Activated CD8-positive, alpha-beta T cell treated with anti-CD3 and anti-CD28 coated beads for 36 hours (primary cell): ENCODE measurements at regions of chr19 and their contacts with region 1.

Region 1: GRCh38 chr19:49272184-49272583 is 52.8 kb downstream of the SLC6A16 start:
- DNase-seq: peak; percentile 9
- ATAC-seq: peak; percentile 72
- H3K4me3 Mint-ChIP-seq: no peak overlapping the region
- H3K27ac Mint-ChIP-seq: no peak overlapping the region
- H3K4me1 Mint-ChIP-seq: peaks cover 5% of the 10 kb centered on the region
- H3K27me3 Mint-ChIP-seq: peaks cover 5% of the 10 kb centered on the region
- CTCF ChIP-seq: no peak

Region 2: DNA sequence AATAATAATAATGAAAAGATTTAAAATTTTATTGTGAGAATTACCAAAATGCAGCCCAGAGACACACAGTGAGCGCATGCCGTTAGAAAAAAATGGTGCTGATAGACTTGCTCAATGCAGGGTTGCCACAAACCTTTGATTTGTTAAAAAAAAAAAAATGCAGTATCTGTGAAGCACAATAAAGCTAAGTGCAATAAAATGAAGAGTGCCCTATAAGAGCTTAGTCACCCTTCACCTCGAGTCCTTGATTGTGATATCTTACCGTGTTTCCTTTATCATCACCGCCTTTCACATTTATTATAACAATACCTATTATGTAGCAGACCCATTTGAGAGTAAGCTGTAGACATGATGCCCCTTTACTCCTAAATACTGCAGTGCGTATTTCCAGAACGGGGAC is 30.4 kb before region 1 on chr19:
- CTCF ChIA-PET with region 1: no interaction called
- POLR2A ChIA-PET with region 1: no interaction called
- intact Hi-C with region 1: no loop called
- DNase-seq: no peak
- ATAC-seq: no peak
- H3K4me3 Mint-ChIP-seq: no peak overlapping the region
- H3K27ac Mint-ChIP-seq: no peak overlapping the region
- H3K4me1 Mint-ChIP-seq: no peaks in the 10 kb centered on the region
- H3K27me3 Mint-ChIP-seq: peaks cover 7% of the 10 kb centered on the region
- CTCF ChIP-seq: no peak

Region 3: DNA sequence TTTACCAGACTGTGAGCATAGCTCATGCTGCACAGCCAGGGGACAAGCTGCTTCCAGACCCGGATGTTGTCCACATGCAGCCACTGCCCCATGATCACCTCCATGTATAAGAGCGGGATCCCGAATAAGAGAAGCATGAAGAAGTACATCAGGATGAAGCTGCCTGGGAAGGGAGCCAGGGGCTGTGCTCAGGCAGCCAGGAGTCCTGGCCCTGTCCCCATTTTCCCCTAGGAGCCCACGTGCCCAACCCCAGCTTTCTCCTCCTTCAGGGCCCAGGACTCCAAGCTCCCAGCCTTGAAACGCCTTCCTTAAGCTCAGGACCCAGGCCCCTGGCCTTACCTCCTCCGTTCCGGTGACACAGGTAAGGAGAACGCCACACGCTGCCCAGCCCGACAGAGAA is 16.5 kb before region 1 on chr19:
- CTCF ChIA-PET with region 1: interaction called, 11 read pairs
- POLR2A ChIA-PET with region 1: no interaction called
- intact Hi-C with region 1: no loop called
- DNase-seq: no peak
- ATAC-seq: no peak
- H3K4me3 Mint-ChIP-seq: no peak overlapping the region
- H3K27ac Mint-ChIP-seq: no peak overlapping the region
- H3K4me1 Mint-ChIP-seq: no peaks in the 10 kb centered on the region
- H3K27me3 Mint-ChIP-seq: peaks cover 21% of the 10 kb centered on the region
- CTCF ChIP-seq: no peak

Region 4: GRCh38 chr19:49287141-49287770 is 15.1 kb after region 1 on chr19:
- CTCF ChIA-PET with region 1: no interaction called
- POLR2A ChIA-PET with region 1: no interaction called
- intact Hi-C with region 1: no loop called
- DNase-seq: no peak
- ATAC-seq: no peak
- H3K4me3 Mint-ChIP-seq: no peak overlapping the region
- H3K27ac Mint-ChIP-seq: no peak overlapping the region
- H3K4me1 Mint-ChIP-seq: no peaks in the 10 kb centered on the region
- H3K27me3 Mint-ChIP-seq: peaks cover 2% of the 10 kb centered on the region
- CTCF ChIP-seq: no peak